ENCODE measurements at regions of chr3 and their contacts with region 1.

Region 1: DNA sequence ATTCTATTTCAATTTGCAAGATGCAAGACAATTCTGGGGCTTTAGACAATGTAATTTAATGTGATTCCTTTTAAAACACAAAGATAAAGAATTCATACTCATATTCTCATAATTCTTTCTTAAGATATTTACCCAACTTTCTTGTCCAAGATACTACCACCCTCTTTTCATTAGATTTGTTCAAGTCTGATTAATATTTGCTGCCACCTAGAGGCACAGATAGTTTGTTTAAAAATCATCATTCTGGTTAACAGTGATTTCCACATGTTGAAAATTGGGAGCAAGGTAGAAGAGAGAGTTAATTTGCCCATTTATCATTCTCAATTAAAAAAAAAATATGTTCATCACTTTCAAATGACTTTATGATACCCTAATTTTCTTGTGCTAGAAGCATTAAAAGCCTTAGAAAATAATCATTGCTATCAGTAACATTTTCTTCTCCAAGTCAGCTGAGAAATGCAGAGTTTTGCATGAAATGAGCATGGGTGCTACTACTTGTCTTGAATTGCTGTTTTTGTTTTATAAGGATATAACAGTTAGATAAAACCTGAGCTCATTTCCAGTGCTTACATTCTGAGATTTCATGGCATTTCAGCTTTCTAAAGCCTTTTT is 11.6 kb downstream of the TAMM41 start:
- DNase-seq: no peak
- CTCF ChIP-seq: peak; percentile 47

Region 2: DNA sequence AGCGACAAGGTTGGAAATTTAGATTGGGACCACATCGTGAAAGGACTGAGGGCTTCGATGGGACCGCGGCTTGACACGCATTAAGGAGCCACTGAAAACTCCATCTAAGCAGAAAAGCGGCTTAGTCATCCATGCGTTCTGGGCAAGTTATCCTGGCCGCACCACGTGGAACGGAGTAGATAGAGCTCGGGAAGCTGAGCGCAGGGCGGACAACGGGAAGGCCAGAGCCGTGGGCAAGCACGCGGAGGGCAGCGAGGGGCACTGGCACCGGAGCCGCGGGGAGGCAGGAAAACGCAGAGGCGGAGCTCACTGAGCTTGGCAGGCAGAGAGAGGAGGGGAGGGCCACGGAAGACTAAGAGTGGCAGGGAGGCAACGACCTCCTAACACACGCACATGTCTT is 130.1 kb before region 1 on chr3:
- CTCF ChIA-PET with region 1: no interaction called
- POLR2A ChIA-PET with region 1: no interaction called
- DNase-seq: no peak
- CTCF ChIP-seq: no peak

Region 3: DNA sequence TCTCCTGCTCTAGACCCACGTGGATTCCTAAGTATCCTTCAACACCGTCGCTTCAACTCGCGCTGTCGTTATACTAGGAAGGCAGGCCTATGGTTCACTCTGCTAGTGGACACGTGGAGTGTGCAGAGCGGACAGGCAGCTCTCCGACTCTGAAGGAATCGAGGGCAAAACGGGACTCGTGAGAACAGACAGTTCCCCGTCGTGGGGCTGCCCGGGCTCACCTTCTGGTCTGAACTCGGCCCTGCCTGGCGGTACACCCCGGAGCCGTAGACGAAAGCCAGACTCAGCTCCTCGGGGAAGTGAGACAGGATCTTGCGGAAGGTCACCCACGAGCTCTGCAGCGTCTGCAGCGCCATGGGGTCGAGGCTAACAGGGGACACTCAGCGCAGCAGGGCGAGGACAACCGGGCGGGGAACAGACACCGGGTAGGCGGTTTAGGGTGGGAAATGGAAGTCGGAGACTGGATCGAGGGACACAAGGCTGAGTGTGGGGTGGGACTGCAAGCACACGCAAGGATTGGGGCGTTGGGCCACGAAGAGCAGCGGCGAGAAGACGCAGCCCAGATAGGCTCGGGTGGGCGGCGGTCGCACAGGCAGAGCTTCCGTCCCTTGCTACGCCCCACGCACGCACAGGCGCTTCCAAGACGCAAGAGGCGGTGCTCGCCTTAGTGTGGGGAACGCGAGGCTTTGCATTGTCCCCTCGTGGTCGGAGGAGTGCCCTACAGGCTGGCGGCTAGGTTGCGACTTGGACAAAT is 11.3 kb after region 1 on chr3 and contains the start of gene TAMM41:
- CTCF ChIA-PET with region 1: interaction called, 14 read pairs
- POLR2A ChIA-PET with region 1: interaction called, 3 read pairs
- DNase-seq: peak; percentile 94
- CTCF ChIP-seq: peak; percentile 93

Region 4: DNA sequence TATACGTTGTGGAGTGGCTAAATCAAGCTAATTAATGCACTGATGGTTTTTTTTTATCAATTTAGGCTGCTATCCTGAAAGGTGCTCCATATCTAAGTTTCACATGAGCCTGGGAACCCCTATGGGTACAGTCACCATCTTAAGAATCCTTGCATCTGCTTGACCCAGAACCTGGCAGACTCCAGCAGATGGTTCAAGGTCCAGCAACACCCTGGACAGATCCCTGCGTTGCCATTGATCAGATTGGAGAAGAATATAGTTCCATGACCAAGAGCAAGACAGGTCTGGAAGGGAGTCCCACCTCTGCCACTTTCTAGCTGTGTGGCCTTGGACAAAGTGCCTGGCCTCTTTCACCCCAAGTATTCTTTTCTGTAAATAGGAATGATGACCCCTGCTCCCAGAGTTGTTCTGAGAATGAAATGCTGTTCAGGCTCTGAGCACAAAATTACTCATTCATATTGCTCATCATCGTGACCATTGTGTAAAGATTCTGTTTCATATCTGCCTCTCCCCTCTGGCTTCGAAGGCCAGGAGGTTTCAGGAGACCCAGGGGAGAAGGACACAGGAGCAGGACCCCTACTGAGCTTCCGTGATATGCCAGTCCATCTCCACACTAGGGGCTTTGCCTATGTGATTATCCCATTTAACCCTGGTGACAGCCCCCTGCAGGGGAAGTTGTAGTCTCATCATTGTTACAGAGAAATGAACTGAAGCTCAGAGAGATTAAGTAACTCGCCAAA is 619.1 kb after region 1 on chr3:
- CTCF ChIA-PET with region 1: no interaction called
- POLR2A ChIA-PET with region 1: no interaction called
- DNase-seq: no peak
- CTCF ChIP-seq: no peak